Left ventricle myocardium superior (tissue), 1 donor: ENCODE measurements at regions of chr2 and their contacts with region 1.

Region 1: GRCh38 chr2:158745044-158745865 is 49.9 kb upstream of the DAPL1 start:
- DNase-seq: no peak
- ATAC-seq: peak; percentile 58

Region 2: GRCh38 chr2:158179660-158180059 is 565.6 kb before region 1 on chr2:
- intact Hi-C with region 1: loop called (anchors 5 kb)
- DNase-seq: no peak
- ATAC-seq: peak; percentile 41

Region 3: DNA sequence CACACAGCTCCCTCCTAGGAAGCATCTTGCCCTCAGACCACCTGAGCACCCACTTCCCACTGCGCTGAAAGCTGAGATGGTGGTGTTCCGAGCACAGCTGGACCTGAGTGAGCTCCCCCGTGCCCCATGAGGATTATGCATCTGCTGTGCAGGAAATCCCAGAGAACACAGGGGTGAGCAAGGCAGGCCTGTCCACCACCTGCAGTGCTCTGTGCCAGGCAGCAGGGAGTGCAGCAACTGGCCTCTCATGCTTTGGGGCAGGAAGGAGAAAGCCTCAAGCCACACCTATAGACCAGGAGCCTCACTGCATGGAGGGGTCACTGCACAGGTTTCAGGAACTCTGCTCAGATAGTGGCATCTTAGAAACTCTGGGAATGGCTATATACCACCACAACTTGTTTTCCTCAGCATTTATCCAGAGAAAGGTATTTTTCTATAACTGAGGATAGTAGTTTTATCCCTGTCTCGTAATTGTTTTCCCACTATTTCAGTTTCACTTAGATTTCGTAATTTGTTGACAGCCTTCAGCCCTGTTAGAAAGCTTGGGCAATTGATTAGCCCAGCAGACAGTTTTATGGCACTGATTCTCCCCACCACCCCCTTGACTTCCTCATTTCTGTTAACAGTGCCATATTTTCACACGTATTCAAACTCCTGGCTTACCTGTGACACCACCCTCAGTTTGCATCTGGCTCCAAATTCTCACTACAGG is 94.5 kb before region 1 on chr2:
- intact Hi-C with region 1: no loop called
- DNase-seq: no peak
- ATAC-seq: peak; percentile 37

Region 4: DNA sequence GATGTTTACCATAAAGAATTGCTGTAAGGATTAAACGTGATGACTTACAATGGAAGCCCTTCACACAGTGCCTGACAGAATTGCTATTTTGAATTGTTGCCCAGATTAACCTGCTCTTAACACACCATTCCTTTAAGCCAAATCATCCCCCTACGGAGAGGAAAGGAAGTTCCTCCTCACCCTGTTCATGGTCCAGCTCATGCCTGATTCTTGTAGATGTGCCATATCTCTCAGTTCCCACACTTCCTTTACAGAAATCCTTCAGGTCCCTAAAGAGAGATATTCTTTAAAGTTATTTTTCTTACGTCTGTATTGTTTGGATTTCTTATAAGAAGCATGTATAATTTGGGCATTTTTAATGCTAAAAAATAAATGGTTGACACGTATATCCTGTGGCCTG is 77.7 kb before region 1 on chr2:
- intact Hi-C with region 1: no loop called
- DNase-seq: no peak
- ATAC-seq: peak; percentile 54